B cell (primary cell): ENCODE measurements at regions of chr12 and their contacts with region 1.

Region 1: GRCh38 chr12:14577344-14577743 is 9.7 kb upstream of the PLBD1 start:
- DNase-seq: peak; percentile 15
- ATAC-seq: no peak
- H3K4me3 ChIP-seq: no peak overlapping the region
- H3K4me3 Mint-ChIP-seq: no peak overlapping the region
- H3K27ac ChIP-seq: no peak overlapping the region
- H3K27ac Mint-ChIP-seq: peak overlapping the region; percentile 4
- H3K4me1 ChIP-seq: peaks cover 6 to 23% of the 10 kb centered on the region in 2 donors
- H3K4me1 Mint-ChIP-seq: peaks cover 27% of the 10 kb centered on the region
- H3K27me3 ChIP-seq: peaks cover 0 to 2% (median 0%) of the 10 kb centered on the region in 4 experiments
- H3K27me3 Mint-ChIP-seq: no peaks in the 10 kb centered on the region
- CTCF ChIP-seq: no peak

Region 2: DNA sequence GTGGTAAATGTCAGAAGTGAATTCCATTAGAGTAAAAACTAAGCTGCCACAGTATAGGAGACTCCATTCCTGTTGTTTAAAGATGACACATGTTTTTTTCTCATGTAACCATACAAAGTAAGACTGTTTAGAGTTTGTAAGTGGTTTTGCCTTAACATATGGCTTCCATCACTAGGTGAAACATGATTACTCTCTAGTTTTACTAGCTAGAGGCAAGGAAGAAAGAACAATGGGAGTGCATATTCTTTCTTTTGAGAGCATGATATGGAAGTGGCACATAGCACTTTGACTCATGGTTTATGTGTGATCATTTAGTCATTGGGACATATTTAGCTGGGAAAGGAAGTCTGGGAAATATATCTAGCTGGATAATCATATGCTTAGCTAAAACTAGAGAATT is 204.1 kb before region 1 on chr12:
- CTCF ChIA-PET with region 1: no interaction called
- POLR2A ChIA-PET with region 1: no interaction called
- intact Hi-C with region 1: no loop called
- DNase-seq: no peak
- ATAC-seq: no peak
- H3K4me3 ChIP-seq: no peak overlapping the region
- H3K4me3 Mint-ChIP-seq: peak overlapping the region; percentile 23
- H3K27ac ChIP-seq: peak overlapping the region in 1 of 2 donors; percentile 51
- H3K27ac Mint-ChIP-seq: peak overlapping the region; percentile 60
- H3K4me1 ChIP-seq: peaks cover 12 to 38% of the 10 kb centered on the region in 2 donors
- H3K4me1 Mint-ChIP-seq: peaks cover 48% of the 10 kb centered on the region
- H3K27me3 ChIP-seq: no peaks in the 10 kb centered on the region
- H3K27me3 Mint-ChIP-seq: no peaks in the 10 kb centered on the region
- CTCF ChIP-seq: no peak

Region 3: DNA sequence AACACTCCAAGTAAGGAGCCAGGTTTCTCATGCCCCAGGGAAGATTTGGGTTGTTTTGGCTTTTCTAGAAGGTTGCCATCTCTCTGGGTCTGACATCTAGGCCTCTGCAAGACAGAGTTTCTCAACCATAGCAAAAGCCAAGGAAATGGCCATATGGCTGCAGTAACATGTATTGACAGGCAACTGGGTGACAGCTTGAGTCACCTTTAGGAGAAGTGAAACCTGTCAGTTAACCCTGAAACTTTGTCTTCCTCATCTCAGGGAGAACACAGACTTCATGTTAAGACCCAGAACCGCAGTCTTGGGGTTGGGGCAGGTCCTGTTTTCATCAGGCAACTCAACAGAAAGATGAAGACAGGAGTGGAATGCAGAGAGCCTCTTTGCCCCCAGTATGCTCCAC is 36.4 kb after region 1 on chr12:
- CTCF ChIA-PET with region 1: interaction called, 31 read pairs
- POLR2A ChIA-PET with region 1: no interaction called
- intact Hi-C with region 1: loop called (anchors 5 kb)
- DNase-seq: peak; percentile 88
- ATAC-seq: peak; percentile 82
- H3K4me3 ChIP-seq: peak overlapping the region in 3 of 5 experiments; percentile 23 to 60 (median 54)
- H3K4me3 Mint-ChIP-seq: peak overlapping the region; percentile 80
- H3K27ac ChIP-seq: peak overlapping the region; percentile 73 to 81
- H3K27ac Mint-ChIP-seq: peak overlapping the region; percentile 92
- H3K4me1 ChIP-seq: peaks cover 28 to 36% of the 10 kb centered on the region in 2 donors
- H3K4me1 Mint-ChIP-seq: peaks cover 34% of the 10 kb centered on the region
- H3K27me3 ChIP-seq: no peaks in the 10 kb centered on the region
- H3K27me3 Mint-ChIP-seq: no peaks in the 10 kb centered on the region
- CTCF ChIP-seq: no peak

Region 4: DNA sequence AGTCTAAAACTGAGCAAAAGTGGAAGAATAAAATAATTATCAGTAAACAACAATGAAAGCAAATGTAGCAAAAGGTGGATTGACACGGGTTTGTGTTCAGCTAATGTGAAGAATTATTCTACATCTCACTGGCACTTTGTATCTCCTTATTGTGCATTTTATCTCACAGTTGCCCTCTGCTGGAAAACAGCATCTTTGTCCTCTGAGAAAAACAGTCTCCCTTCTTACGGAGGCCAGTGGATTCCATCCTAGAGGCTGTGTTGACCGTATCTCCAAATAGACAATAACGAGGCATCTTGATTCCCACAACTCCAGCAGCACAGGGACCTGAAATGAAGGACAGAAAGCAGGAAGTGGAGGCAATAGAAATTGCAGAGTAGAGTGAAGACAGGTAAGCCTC is 41.6 kb after region 1 on chr12:
- CTCF ChIA-PET with region 1: interaction called, 31 read pairs
- POLR2A ChIA-PET with region 1: no interaction called
- intact Hi-C with region 1: loop called (anchors 5 kb)
- DNase-seq: peak; percentile 32
- ATAC-seq: no peak
- H3K4me3 ChIP-seq: no peak overlapping the region
- H3K4me3 Mint-ChIP-seq: no peak overlapping the region
- H3K27ac ChIP-seq: no peak overlapping the region
- H3K27ac Mint-ChIP-seq: peak overlapping the region; percentile 17
- H3K4me1 ChIP-seq: peaks cover 34 to 40% of the 10 kb centered on the region in 2 donors
- H3K4me1 Mint-ChIP-seq: peaks cover 42% of the 10 kb centered on the region
- H3K27me3 ChIP-seq: no peaks in the 10 kb centered on the region
- H3K27me3 Mint-ChIP-seq: no peaks in the 10 kb centered on the region
- CTCF ChIP-seq: peak; percentile 23

Region 5: DNA sequence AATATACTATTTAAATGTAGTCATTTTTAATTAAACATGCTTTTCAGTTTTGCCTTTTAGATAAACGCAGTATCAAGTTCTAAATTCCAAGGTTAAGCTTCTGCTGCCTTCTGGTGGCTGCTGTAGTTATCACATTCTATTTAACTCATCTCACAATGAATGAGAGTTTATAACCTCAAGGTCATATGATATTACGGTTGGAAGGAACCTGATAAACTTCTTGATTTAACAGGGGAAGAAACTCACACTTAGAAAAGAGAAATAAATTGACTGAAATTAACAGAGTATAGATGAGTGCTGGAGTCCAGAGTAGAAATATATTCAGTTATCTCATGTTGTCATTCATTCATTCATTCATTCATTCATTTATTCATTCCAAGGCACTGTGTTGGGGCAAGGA is 87.2 kb after region 1 on chr12:
- CTCF ChIA-PET with region 1: interaction called, 6 read pairs
- POLR2A ChIA-PET with region 1: no interaction called
- intact Hi-C with region 1: loop called (anchors 5 kb)
- DNase-seq: peak; percentile 77
- ATAC-seq: peak; percentile 80
- H3K4me3 ChIP-seq: no peak overlapping the region
- H3K4me3 Mint-ChIP-seq: no peak overlapping the region
- H3K27ac ChIP-seq: no peak overlapping the region
- H3K27ac Mint-ChIP-seq: no peak overlapping the region
- H3K4me1 ChIP-seq: no peaks in the 10 kb centered on the region
- H3K4me1 Mint-ChIP-seq: peaks cover 12% of the 10 kb centered on the region
- H3K27me3 ChIP-seq: no peaks in the 10 kb centered on the region
- H3K27me3 Mint-ChIP-seq: no peaks in the 10 kb centered on the region
- CTCF ChIP-seq: peak; percentile 82

Region 6: GRCh38 chr12:14716848-14717444 is 139.6 kb after region 1 on chr12:
- CTCF ChIA-PET with region 1: interaction called, 4 read pairs
- POLR2A ChIA-PET with region 1: no interaction called
- intact Hi-C with region 1: loop called (anchors 2 kb)
- DNase-seq: peak; percentile 72
- ATAC-seq: peak; percentile 69
- H3K4me3 ChIP-seq: no peak overlapping the region
- H3K4me3 Mint-ChIP-seq: no peak overlapping the region
- H3K27ac ChIP-seq: no peak overlapping the region
- H3K27ac Mint-ChIP-seq: no peak overlapping the region
- H3K4me1 ChIP-seq: no peaks in the 10 kb centered on the region
- H3K4me1 Mint-ChIP-seq: no peaks in the 10 kb centered on the region
- H3K27me3 ChIP-seq: no peaks in the 10 kb centered on the region
- H3K27me3 Mint-ChIP-seq: peaks cover 9% of the 10 kb centered on the region
- CTCF ChIP-seq: peak; percentile 71

Region 7: DNA sequence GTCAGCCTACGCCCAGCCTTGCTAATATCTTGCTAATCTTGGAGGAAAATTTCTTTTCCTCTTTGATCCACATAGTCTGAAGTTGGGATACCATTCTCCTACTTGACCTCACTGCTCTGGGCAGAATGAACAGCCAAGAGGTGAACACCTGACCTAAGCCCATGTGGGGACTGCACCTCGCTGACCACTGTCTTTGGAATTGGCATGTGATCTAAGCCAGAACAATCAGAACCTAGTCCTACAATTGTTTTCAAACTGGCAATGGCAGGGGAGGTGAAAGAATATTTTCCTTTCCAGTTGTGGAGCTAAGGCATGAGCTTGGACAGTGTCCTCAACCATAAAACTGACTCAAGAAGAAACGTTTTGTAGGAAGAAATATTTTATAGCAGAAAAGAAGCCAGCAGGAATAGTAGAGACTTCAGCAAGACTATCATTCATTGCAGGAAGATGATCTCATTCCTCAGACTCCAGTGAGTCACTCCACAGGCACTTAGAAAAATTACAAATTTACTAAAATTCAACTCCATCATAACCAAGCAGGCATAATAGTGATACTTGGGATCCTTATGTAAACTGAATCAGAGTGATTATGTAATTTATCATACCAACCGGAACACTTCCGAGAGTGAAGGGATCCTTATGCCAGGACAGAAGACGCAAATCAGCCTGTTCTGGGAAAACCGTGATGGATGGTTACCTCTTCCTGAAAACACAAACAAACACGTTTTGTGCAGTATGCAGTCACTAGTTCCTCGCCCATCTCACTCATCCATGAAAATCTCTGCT is 759.6 kb after region 1 on chr12:
- CTCF ChIA-PET with region 1: no interaction called
- POLR2A ChIA-PET with region 1: no interaction called
- intact Hi-C with region 1: no loop called
- DNase-seq: no peak
- ATAC-seq: no peak
- H3K4me3 ChIP-seq: no peak overlapping the region
- H3K4me3 Mint-ChIP-seq: no peak overlapping the region
- H3K27ac ChIP-seq: no peak overlapping the region
- H3K27ac Mint-ChIP-seq: no peak overlapping the region
- H3K4me1 ChIP-seq: no peaks in the 10 kb centered on the region
- H3K4me1 Mint-ChIP-seq: no peaks in the 10 kb centered on the region
- H3K27me3 ChIP-seq: peaks cover 0 to 5% (median 0%) of the 10 kb centered on the region in 4 experiments
- H3K27me3 Mint-ChIP-seq: peaks cover 23% of the 10 kb centered on the region
- CTCF ChIP-seq: no peak